ENCODE measurements at regions of chr13 and their contacts with region 1.

Region 1: DNA sequence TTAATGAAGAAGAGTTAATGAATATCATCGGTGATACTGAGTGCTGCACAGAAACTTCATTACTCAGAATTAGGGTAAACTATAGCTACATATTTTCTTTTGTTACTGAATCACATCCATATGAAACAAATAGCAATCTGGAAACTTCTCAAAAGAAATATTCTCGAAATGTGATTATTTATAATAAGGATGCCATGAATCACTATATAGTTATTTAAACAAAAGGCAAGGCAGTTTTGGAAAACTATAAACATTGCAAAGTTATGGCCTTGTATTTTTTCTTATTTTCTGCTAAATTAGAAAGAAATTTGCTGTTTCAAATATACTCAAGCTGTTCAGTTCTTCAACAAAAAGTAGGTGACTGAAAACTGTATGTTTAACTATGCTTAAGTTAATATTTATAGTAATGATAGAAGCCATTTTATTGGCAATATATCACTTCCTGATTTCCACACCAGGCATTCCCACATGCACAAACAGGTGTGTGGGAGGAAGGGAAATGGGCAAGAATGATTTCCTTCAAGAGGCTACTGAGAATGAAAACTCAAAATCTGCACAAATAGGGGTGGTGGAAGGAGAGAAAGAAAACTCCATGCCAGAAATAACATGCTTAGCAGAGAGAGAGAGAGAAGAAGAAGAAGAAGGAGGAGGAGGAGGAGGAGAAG is 74.5 kb upstream of the FRY start:
- DNase-seq: no peak
- H3K4me3 ChIP-seq: no peak overlapping the region
- H3K27ac ChIP-seq: no peak overlapping the region
- H3K4me1 ChIP-seq: no peaks in the 10 kb centered on the region
- H3K27me3 ChIP-seq: no peaks in the 10 kb centered on the region
- CTCF ChIP-seq: no peak
- POLR2A ChIP-seq: no peak

Region 2: GRCh38 chr13:30486230-30487074 is 1470.7 kb before region 1 on chr13:
- intact Hi-C with region 1: no loop called
- DNase-seq: peak; percentile 69 to 87
- H3K4me3 ChIP-seq: peak overlapping the region in 1 of 3 donors; percentile 13
- H3K27ac ChIP-seq: peak overlapping the region; percentile 77 to 88
- H3K4me1 ChIP-seq: peaks cover 0 to 6% of the 10 kb centered on the region in 2 donors
- H3K27me3 ChIP-seq: no peaks in the 10 kb centered on the region
- CTCF ChIP-seq: no peak
- POLR2A ChIP-seq: no peak

Region 3: GRCh38 chr13:31896427-31896826 is 60.7 kb before region 1 on chr13:
- intact Hi-C with region 1: no loop called
- DNase-seq: no peak
- H3K4me3 ChIP-seq: no peak overlapping the region
- H3K27ac ChIP-seq: peak overlapping the region in 1 of 2 donors; percentile 15
- H3K4me1 ChIP-seq: no peaks in the 10 kb centered on the region
- H3K27me3 ChIP-seq: no peaks in the 10 kb centered on the region
- CTCF ChIP-seq: no peak
- POLR2A ChIP-seq: no peak

Region 4: GRCh38 chr13:32001185-32001768 is 44.2 kb after region 1 on chr13:
- intact Hi-C with region 1: loop called (anchors 2 kb)
- DNase-seq: no peak
- H3K4me3 ChIP-seq: no peak overlapping the region
- H3K27ac ChIP-seq: no peak overlapping the region
- H3K4me1 ChIP-seq: no peaks in the 10 kb centered on the region
- H3K27me3 ChIP-seq: no peaks in the 10 kb centered on the region
- CTCF ChIP-seq: peak; percentile 39 to 57 (median 48)
- POLR2A ChIP-seq: no peak